H1 (cell line): ENCODE measurements at regions of chr7 and their contacts with region 1.

Region 1: GRCh38 chr7:117532656-117533055 is 52.8 kb downstream of the CFTR start:
- DNase-seq: no peak
- H3K4me3 ChIP-seq: no peak overlapping the region
- H3K27ac ChIP-seq: no peak overlapping the region
- H3K4me1 ChIP-seq: no peaks in the 10 kb centered on the region
- H3K27me3 ChIP-seq: no peaks in the 10 kb centered on the region
- CTCF ChIP-seq: no peak
- EP300 ChIP-seq: no peak
- POLR2A ChIP-seq: no peak
- RAD21 ChIP-seq: no peak

Region 2: DNA sequence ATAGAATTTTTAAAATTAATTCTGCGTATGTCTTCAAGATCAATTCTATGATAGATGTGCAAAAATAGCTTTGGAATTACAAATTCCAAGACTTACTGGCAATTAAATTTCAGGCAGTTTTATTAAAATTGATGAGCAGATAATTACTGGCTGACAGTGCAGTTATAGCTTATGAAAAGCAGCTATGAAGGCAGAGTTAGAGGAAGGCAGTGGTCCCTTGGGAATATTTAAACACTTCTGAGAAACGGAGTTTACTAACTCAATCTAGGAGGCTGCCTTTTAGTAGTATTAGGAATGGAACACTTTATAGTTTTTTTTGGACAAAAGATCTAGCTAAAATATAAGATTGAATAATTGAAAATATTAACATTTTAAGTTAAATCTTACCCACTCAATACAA is 18.0 kb after region 1 on chr7:
- CTCF ChIA-PET with region 1: interaction called, 11 read pairs
- POLR2A ChIA-PET with region 1: no interaction called
- DNase-seq: no peak
- H3K4me3 ChIP-seq: no peak overlapping the region
- H3K27ac ChIP-seq: no peak overlapping the region
- H3K4me1 ChIP-seq: no peaks in the 10 kb centered on the region; a peak in 1 of 7 replicates
- H3K27me3 ChIP-seq: no peaks in the 10 kb centered on the region
- CTCF ChIP-seq: no peak
- EP300 ChIP-seq: no peak
- POLR2A ChIP-seq: no peak
- RAD21 ChIP-seq: no peak

Region 3: DNA sequence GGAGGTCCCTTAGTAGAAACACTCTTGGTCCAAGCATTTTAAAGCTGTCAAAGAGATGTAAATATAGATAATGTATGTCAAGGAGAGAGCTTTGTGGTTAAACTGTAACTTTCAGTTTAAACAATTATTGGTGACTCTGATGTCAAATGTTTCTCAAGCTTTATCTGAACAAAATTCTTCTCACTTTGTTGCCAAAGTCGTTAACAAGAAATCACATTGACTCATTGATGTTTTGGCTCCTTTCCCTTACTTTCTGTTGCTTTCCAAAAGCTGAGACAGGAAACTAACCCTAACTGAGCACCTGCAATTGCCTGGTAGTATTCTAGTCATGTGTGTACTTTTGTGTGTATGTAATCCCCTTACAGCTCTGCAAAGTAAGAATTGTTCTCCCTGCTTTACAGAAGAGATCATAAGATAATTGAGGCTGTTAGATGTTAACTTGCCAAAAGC is 55.7 kb after region 1 on chr7:
- CTCF ChIA-PET with region 1: no interaction called
- POLR2A ChIA-PET with region 1: no interaction called
- DNase-seq: no peak
- H3K4me3 ChIP-seq: no peak overlapping the region
- H3K27ac ChIP-seq: no peak overlapping the region
- H3K4me1 ChIP-seq: peaks cover 0 to 2% (median 2%) of the 10 kb centered on the region in 4 experiments; a peak in 2 of 7 replicates
- H3K27me3 ChIP-seq: no peaks in the 10 kb centered on the region
- CTCF ChIP-seq: no peak
- EP300 ChIP-seq: no peak
- POLR2A ChIP-seq: no peak
- RAD21 ChIP-seq: no peak